Activated B cell treated with CpG ODN at 0.5 μM for 24 hours (primary cell): ENCODE measurements at regions of chr2 and their contacts with region 1.

Region 1: GRCh38 chr2:61888267-61889055 is at the start of gene CCT4:
- DNase-seq: peak; percentile 99
- ATAC-seq: peak; percentile 85
- H3K4me3 Mint-ChIP-seq: peak within 1 kb of the TSS; percentile 100
- H3K27ac Mint-ChIP-seq: peak within 1 kb of the TSS; percentile 99
- H3K4me1 Mint-ChIP-seq: peaks cover 23% of the 10 kb centered on the region
- H3K27me3 Mint-ChIP-seq: no peaks in the 10 kb centered on the region
- CTCF ChIP-seq: no peak
- total RNA-seq, gene CCT4: 172 and 188 TPM in 2 replicates

Region 2: GRCh38 chr2:61016808-61017555 is 871.5 kb before region 1 on chr2:
- CTCF ChIA-PET with region 1: no interaction called
- POLR2A ChIA-PET with region 1: no interaction called
- intact Hi-C with region 1: loop called (anchors 5 kb)
- DNase-seq: peak; percentile 62
- ATAC-seq: peak; percentile 70
- H3K4me3 Mint-ChIP-seq: peak overlapping the region; percentile 99
- H3K27ac Mint-ChIP-seq: peak overlapping the region; percentile 98
- H3K4me1 Mint-ChIP-seq: peaks cover 33% of the 10 kb centered on the region
- H3K27me3 Mint-ChIP-seq: no peaks in the 10 kb centered on the region
- CTCF ChIP-seq: no peak

Region 3: DNA sequence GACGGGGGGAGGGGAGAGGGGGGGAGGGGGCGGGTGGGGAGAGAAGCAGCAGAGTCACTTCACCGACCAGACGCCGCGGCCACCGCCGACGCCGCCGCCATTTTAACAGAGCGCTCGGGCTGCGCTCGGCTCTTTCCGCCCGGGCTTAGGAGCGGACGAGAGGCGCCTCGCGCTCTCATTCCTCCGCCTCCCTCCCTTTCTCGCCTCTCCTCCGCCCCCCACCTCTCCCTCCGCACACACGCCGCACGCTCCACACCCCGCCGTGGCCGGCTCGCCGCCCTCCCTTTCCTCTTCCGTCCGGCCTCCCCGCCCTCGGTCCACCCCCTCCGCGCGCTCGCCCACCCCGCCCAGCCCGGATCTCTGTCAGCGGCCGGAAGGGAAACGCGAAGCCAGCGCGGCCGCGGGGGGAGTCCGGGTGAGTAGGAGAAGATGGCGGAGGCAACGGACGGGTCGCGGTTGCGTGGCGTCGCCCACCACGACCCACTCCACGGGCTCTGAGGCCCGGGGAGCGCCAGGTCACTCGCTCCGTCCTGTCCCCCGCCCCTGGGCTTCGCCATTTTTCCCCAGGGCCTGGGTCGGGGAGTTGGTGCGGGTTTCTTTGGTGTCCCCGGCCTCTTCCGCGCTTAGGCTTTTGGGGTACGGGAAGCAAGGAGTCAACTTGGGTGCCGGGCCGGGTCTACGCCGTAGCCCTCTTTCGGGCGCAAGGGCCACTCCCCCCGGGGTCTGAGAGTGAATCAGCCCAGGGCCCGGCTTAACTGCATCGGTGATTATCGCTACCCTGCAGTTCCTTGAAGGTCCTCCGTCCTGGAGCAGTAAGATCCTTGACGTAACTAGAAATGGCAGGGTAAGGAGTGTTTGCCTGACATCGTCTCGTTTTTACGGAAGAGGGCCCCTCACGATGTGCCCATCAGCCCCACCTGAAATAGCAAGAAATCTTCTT is 417.2 kb before region 1 on chr2 and contains the start of gene USP34:
- CTCF ChIA-PET with region 1: no interaction called
- POLR2A ChIA-PET with region 1: no interaction called
- intact Hi-C with region 1: loop called (anchors 1 kb)
- DNase-seq: peak; percentile 79
- ATAC-seq: peak; percentile 82
- H3K4me3 Mint-ChIP-seq: peak within 1 kb of the TSS; percentile 95
- H3K27ac Mint-ChIP-seq: peak within 1 kb of the TSS; percentile 95
- H3K4me1 Mint-ChIP-seq: peaks cover 38% of the 10 kb centered on the region
- H3K27me3 Mint-ChIP-seq: no peaks in the 10 kb centered on the region
- CTCF ChIP-seq: no peak
- total RNA-seq, gene USP34: 142 and 176 TPM in 2 replicates

Region 4: GRCh38 chr2:61764035-61764800 is 124.2 kb before region 1 on chr2:
- CTCF ChIA-PET with region 1: no interaction called
- POLR2A ChIA-PET with region 1: no interaction called
- intact Hi-C with region 1: loop called (anchors 1 kb)
- DNase-seq: peak; percentile 88
- ATAC-seq: peak; percentile 98
- H3K4me3 Mint-ChIP-seq: peak overlapping the region; percentile 95
- H3K27ac Mint-ChIP-seq: peak overlapping the region; percentile 94
- H3K4me1 Mint-ChIP-seq: peaks cover 16% of the 10 kb centered on the region
- H3K27me3 Mint-ChIP-seq: no peaks in the 10 kb centered on the region
- CTCF ChIP-seq: no peak

Region 5: DNA sequence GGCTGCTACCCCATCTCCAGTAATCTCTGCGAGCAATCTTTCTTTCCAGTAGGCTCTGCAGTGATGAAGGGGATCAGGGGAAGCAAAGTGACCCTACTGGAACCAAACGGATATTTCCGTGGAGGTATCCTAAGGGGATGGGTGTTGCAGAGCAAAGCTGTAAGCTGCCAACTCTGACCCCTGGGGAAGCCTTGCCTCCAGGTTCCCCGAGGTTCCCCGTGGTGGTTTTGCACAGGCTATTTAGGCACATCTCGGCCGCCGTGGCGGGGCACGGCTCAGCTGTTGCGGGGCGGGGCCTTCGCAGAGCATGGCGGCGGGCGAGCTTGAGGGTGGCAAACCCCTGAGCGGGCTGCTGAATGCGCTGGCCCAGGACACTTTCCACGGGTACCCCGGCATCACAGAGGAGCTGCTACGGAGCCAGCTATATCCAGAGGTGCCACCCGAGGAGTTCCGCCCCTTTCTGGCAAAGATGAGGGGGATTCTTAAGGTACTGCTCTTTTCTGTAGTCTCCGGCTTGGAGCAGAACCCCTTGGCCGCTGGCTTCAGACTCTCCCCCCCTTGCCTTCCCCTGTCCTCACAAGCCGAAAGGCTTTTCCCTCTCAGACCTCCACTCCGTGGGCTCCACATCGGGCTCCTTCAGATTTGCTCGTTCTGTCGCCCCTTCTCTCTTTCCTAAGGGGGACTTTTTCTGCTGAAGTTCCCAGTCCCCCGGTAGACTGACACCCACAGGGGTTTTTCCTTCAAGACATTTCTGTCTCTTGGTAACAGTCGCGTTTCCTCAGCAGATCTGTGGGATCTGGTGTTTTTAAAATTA is 17.1 kb after region 1 on chr2 and contains the start of gene COMMD1:
- CTCF ChIA-PET with region 1: interaction called, 3 read pairs
- POLR2A ChIA-PET with region 1: interaction called, 13 read pairs
- intact Hi-C with region 1: loop called (anchors 1 kb)
- DNase-seq: peak; percentile 78
- ATAC-seq: peak; percentile 100
- H3K4me3 Mint-ChIP-seq: peak within 1 kb of the TSS; percentile 97
- H3K27ac Mint-ChIP-seq: peak within 1 kb of the TSS; percentile 86
- H3K4me1 Mint-ChIP-seq: peaks cover 11% of the 10 kb centered on the region
- H3K27me3 Mint-ChIP-seq: no peaks in the 10 kb centered on the region
- CTCF ChIP-seq: no peak
- total RNA-seq, gene COMMD1: 36.8 and 37.1 TPM in 2 replicates

Region 6: DNA sequence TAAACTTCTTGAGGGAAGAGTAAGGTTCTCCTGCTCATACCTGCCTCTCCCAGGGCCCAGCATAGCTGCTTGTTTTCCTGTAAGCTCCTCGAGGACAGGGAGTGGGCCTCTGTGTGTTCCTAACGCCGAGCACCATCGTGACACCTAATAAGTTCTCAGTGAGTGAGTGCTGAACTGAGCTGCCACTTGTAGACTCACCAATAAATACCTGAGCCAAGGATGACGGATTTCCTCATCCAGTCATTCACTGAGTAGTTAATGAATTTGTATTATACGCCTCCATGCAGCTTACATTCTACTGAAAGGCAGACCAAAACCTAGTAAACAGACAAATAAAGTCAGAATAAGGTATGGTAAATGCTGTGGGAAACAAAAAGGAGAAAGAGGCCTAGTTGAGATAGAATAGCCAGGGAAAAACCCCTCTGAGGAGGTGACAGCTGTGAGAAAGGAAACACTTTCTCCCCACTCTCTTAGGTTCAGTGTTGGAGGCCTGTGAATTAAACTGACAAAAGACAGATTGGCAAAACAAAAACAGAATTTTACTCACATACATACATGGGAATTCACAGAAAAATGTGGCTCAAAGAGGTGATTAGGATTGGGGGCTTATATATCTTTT is 446.1 kb after region 1 on chr2:
- CTCF ChIA-PET with region 1: no interaction called
- POLR2A ChIA-PET with region 1: no interaction called
- intact Hi-C with region 1: no loop called
- DNase-seq: no peak
- ATAC-seq: no peak
- H3K4me3 Mint-ChIP-seq: no peak overlapping the region
- H3K27ac Mint-ChIP-seq: no peak overlapping the region
- H3K4me1 Mint-ChIP-seq: peaks cover 7% of the 10 kb centered on the region
- H3K27me3 Mint-ChIP-seq: no peaks in the 10 kb centered on the region
- CTCF ChIP-seq: no peak

Region 7: DNA sequence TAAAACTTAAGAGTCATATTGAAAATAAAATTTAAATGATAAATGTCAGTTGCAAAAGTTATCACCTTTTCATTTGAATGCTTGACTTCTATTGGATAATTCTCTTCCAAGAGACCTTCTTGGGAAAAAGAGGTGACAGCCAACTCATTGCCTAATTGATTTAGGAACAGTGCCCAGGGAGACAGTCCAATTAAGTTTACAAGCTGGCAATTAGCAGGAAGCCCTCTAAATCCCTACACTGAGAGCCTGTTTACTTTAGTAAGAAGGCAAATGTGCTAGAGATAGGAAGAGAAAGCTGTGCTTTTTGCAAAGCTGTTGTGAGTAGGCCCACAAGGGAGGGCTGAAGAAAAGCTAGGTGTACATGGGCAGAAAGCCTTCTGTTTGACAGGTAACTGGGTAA is 1510.7 kb after region 1 on chr2:
- CTCF ChIA-PET with region 1: no interaction called
- POLR2A ChIA-PET with region 1: interaction called, 10 read pairs
- intact Hi-C with region 1: no loop called
- DNase-seq: no peak
- ATAC-seq: no peak
- H3K4me3 Mint-ChIP-seq: no peak overlapping the region
- H3K27ac Mint-ChIP-seq: no peak overlapping the region
- H3K4me1 Mint-ChIP-seq: no peaks in the 10 kb centered on the region
- H3K27me3 Mint-ChIP-seq: no peaks in the 10 kb centered on the region
- CTCF ChIP-seq: no peak